OCI-LY7 (cell line): ENCODE measurements at regions of chr2 and their contacts with region 1.

Region 1: GRCh38 chr2:3505771-3506170 is 13.6 kb downstream of the ADI1 start:
- DNase-seq: no peak
- H3K4me3 ChIP-seq: no peak overlapping the region
- H3K27ac ChIP-seq: no peak overlapping the region
- H3K4me1 ChIP-seq: no peaks in the 10 kb centered on the region
- CTCF ChIP-seq: no peak

Region 2: GRCh38 chr2:3536682-3537632 is 31.2 kb after region 1 on chr2:
- CTCF ChIA-PET with region 1: interaction called, 12 read pairs
- POLR2A ChIA-PET with region 1: no interaction called
- intact Hi-C with region 1: no loop called
- DNase-seq: peak; percentile 83
- H3K4me3 ChIP-seq: peak overlapping the region; percentile 70
- H3K27ac ChIP-seq: peak overlapping the region; percentile 34
- H3K4me1 ChIP-seq: peaks cover 20% of the 10 kb centered on the region
- CTCF ChIP-seq: peak; percentile 84